Activated CD4-positive, alpha-beta memory T cell treated with anti-CD3 and anti-CD28 coated beads for 36 hours (primary cell): ENCODE measurements at regions of chr11 and their contacts with region 1.

Region 1: GRCh38 chr11:102560555-102561011 is 30.0 kb upstream of the MMP7 start:
- DNase-seq: no peak
- H3K4me3 Mint-ChIP-seq: no peak overlapping the region
- H3K27ac Mint-ChIP-seq: peak overlapping the region; percentile 38
- H3K4me1 Mint-ChIP-seq: peaks cover 39% of the 10 kb centered on the region
- H3K27me3 Mint-ChIP-seq: no peaks in the 10 kb centered on the region

Region 2: DNA sequence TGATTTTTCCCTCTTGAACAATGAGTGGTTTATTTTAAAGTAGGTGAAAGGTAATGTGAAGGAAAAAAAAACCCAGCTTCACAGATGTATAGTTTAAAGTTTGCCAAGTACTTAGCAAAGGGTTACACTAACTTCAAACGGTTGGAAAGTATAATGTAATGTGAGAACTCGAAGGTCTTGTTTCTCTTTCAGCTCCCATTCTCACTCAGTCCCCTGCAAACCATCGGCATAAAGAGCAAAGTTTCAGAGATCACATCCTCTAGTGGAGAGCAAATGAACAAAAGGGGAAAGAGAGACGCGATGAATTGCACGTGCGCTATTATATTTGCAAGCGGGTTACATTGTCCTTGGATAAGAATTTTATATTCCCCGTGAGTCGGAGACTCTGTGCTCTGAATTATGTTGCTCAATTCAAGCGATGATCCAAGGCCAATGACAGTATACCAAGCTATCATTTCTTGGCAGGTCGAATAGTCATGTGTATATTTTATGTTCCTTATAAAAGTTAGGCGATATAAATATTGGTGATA is 280.9 kb before region 1 on chr11:
- CTCF ChIA-PET with region 1: no interaction called
- POLR2A ChIA-PET with region 1: no interaction called
- intact Hi-C with region 1: loop called (anchors 5 kb)
- DNase-seq: no peak
- H3K4me3 Mint-ChIP-seq: no peak overlapping the region
- H3K27ac Mint-ChIP-seq: no peak overlapping the region
- H3K4me1 Mint-ChIP-seq: peaks cover 10% of the 10 kb centered on the region
- H3K27me3 Mint-ChIP-seq: peaks cover 17% of the 10 kb centered on the region

Region 3: DNA sequence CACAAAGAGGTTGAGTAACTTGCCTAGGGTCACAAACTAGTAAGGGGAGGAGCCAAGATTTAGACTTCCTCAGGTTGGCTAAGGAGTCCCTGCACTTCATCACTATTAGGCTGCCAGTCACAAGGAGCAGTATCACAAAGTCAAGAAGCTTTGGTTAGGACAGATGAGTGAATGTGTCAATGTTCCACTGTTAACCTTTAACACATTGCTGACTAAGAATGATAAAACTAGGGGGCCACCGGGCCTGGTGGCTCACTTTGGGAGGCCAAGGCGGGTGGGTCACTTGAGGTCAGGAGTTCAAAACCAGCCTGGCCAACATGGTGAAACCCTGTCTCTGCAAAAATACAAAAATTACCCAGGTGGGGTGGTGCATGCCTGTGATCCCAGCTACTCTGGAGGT is 140.0 kb before region 1 on chr11:
- CTCF ChIA-PET with region 1: no interaction called
- POLR2A ChIA-PET with region 1: no interaction called
- intact Hi-C with region 1: loop called (anchors 5 kb)
- DNase-seq: peak; percentile 67
- H3K4me3 Mint-ChIP-seq: no peak overlapping the region
- H3K27ac Mint-ChIP-seq: peak overlapping the region; percentile 52
- H3K4me1 Mint-ChIP-seq: peaks cover 93% of the 10 kb centered on the region
- H3K27me3 Mint-ChIP-seq: no peaks in the 10 kb centered on the region

Region 4: DNA sequence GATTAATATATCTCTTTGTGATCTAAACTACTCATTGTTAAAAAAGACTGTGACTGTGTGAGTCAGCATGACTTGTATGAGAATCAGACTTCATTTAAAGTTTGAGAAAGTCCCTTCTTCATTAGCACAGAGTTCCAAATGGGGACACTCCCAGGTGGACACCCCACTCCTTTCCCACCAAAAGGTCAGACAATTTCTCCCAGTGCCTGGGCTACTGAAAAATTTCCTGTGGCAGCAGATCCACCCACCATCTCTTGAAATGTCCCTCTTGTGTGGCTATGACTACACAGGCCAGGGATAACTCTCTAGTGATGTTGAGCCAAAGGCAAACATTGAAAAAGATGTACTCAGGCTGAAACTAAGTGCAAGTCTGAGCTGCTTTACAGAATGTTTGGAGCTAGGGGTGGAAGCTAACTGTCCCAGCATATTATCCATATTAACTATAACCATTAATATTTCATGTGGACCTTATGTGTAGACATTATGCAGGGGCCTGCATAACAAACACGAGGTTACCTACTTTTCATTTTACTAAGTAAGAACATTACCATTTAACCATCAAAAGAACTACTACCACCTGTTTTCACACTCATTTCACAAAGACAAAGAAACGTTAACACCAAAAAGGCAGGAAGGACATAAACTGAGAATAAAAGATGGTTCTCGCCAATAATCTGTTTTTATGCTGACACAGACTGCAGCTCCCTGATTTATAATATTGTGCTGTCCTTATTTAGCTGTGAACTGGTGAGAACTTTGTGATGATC is 19.8 kb after region 1 on chr11:
- CTCF ChIA-PET with region 1: no interaction called
- POLR2A ChIA-PET with region 1: no interaction called
- intact Hi-C with region 1: loop called (anchors 1 kb)
- DNase-seq: peak; percentile 33
- H3K4me3 Mint-ChIP-seq: no peak overlapping the region
- H3K27ac Mint-ChIP-seq: peak overlapping the region; percentile 40
- H3K4me1 Mint-ChIP-seq: peaks cover 35% of the 10 kb centered on the region
- H3K27me3 Mint-ChIP-seq: no peaks in the 10 kb centered on the region

Region 5: GRCh38 chr11:102589047-102589459 is 28.5 kb after region 1 on chr11:
- CTCF ChIA-PET with region 1: no interaction called
- POLR2A ChIA-PET with region 1: no interaction called
- intact Hi-C with region 1: loop called (anchors 1 kb)
- DNase-seq: peak; percentile 77
- H3K4me3 Mint-ChIP-seq: no peak overlapping the region
- H3K27ac Mint-ChIP-seq: peak overlapping the region; percentile 38
- H3K4me1 Mint-ChIP-seq: peaks cover 22% of the 10 kb centered on the region
- H3K27me3 Mint-ChIP-seq: peaks cover 1% of the 10 kb centered on the region

Region 6: GRCh38 chr11:102599642-102600261 is 39.2 kb after region 1 on chr11:
- CTCF ChIA-PET with region 1: interaction called, 7 read pairs
- POLR2A ChIA-PET with region 1: no interaction called
- intact Hi-C with region 1: loop called (anchors 1 kb)
- DNase-seq: no peak
- H3K4me3 Mint-ChIP-seq: no peak overlapping the region
- H3K27ac Mint-ChIP-seq: peak overlapping the region; percentile 75
- H3K4me1 Mint-ChIP-seq: peaks cover 35% of the 10 kb centered on the region
- H3K27me3 Mint-ChIP-seq: peaks cover 1% of the 10 kb centered on the region